HCT116 (cell line): ENCODE measurements at regions of chr5 and their contacts with region 1.

Region 1: GRCh38 chr5:57298295-57298984 is 124.6 kb downstream of the GPBP1 start:
- DNase-seq: peak; percentile 82
- ATAC-seq: peak; percentile 75
- H3K4me3 ChIP-seq: no peak overlapping the region
- H3K27ac ChIP-seq: peak overlapping the region; percentile 23; the same call in 1 of the 2 replicates
- H3K4me1 ChIP-seq: peaks cover 21 to 38% of the 10 kb centered on the region in 2 experiments
- H3K27me3 ChIP-seq: no peaks in the 10 kb centered on the region
- CTCF ChIP-seq: peak; percentile 62 to 82 (median 69)
- POLR2A ChIP-seq: no peak
- RAD21 ChIP-seq: peak; percentile 92

Region 2: GRCh38 chr5:57383093-57383861 is 84.8 kb after region 1 on chr5:
- CTCF ChIA-PET with region 1: no interaction called
- POLR2A ChIA-PET with region 1: no interaction called
- RAD21 ChIA-PET with region 1: no interaction called
- intact Hi-C with region 1: loop called (anchors 1 kb)
- DNase-seq: peak; percentile 92
- ATAC-seq: peak; percentile 96
- H3K4me3 ChIP-seq: peak overlapping the region in 1 of 2 experiments; percentile 17; a peak in 1 of 4 replicates
- H3K27ac ChIP-seq: peak overlapping the region; percentile 95
- H3K4me1 ChIP-seq: peaks cover 27 to 37% of the 10 kb centered on the region in 2 experiments
- H3K27me3 ChIP-seq: no peaks in the 10 kb centered on the region
- CTCF ChIP-seq: 0 out of 6 replicates have a peak, but pooled peaks of 1 of the 3 experiments have one; percentile 17
- POLR2A ChIP-seq: no peak
- RAD21 ChIP-seq: peak; percentile 50

Region 3: GRCh38 chr5:57494104-57495098 is 196.0 kb after region 1 on chr5:
- CTCF ChIA-PET with region 1: interaction called, 16 read pairs
- POLR2A ChIA-PET with region 1: interaction called, 3 read pairs
- RAD21 ChIA-PET with region 1: interaction called in 1 of 2 experiments, 3 read pairs
- intact Hi-C with region 1: loop called (anchors 1 kb)
- DNase-seq: peak; percentile 90
- ATAC-seq: peak; percentile 92
- H3K4me3 ChIP-seq: peak overlapping the region; percentile 2 to 47; a peak in 3 of 4 replicates
- H3K27ac ChIP-seq: peak overlapping the region; percentile 75
- H3K4me1 ChIP-seq: peaks cover 40 to 56% of the 10 kb centered on the region in 2 experiments
- H3K27me3 ChIP-seq: no peaks in the 10 kb centered on the region
- CTCF ChIP-seq: no peak
- POLR2A ChIP-seq: no peak
- RAD21 ChIP-seq: peak; percentile 25; the same call in 1 of the 2 replicates

Region 4: DNA sequence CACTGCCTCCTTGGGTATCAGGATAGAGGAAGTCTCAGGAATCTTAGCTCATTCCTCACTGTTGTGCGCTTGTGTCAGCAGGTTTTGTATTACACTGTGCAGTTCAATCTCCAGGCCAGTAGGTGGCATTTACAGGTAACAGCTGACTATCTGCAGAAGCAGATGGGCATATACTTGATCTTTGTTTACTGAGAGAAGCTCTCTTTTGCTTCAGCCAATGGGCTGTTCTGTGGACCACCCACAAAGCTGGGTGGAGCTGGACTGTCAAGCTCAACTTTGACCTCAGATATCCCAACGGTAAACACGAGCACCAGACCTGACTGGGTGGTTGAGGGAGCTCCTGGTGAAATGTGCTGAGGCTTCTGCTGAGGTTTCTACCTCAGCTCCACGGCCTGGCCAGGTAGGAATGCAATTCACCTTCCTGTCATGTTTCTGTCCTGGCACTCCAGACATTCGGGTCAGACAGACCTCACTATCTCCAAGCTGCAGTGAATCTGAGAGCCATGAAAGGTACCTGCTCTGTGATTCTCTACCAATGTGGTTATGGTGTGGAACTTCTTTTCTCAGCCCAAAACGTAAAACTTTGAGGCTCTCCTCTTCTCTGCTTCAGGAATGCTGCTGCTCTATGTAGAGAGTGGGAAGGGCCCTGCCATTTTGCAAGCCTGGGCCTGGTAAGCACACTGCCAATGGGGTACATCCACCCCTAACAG is 352.1 kb after region 1 on chr5:
- CTCF ChIA-PET with region 1: interaction called, 10 read pairs
- POLR2A ChIA-PET with region 1: no interaction called
- RAD21 ChIA-PET with region 1: no interaction called
- intact Hi-C with region 1: no loop called
- DNase-seq: peak; percentile 57
- ATAC-seq: peak; percentile 97
- H3K4me3 ChIP-seq: no peak overlapping the region
- H3K27ac ChIP-seq: no peak overlapping the region
- H3K4me1 ChIP-seq: peaks cover 0 to 10% of the 10 kb centered on the region in 2 experiments; a peak in 2 of 4 replicates
- H3K27me3 ChIP-seq: no peaks in the 10 kb centered on the region
- CTCF ChIP-seq: peak; percentile 44 to 82 (median 81); a peak in 5 of 6 replicates
- POLR2A ChIP-seq: no peak
- RAD21 ChIP-seq: peak; percentile 80

Region 5: GRCh38 chr5:57887851-57888621 is 589.6 kb after region 1 on chr5:
- CTCF ChIA-PET with region 1: interaction called, 4 read pairs
- POLR2A ChIA-PET with region 1: no interaction called
- RAD21 ChIA-PET with region 1: no interaction called
- intact Hi-C with region 1: loop called (anchors 2 kb)
- DNase-seq: peak; percentile 61
- ATAC-seq: peak; percentile 88
- H3K4me3 ChIP-seq: no peak overlapping the region
- H3K27ac ChIP-seq: no peak overlapping the region
- H3K4me1 ChIP-seq: peaks cover 18 to 29% of the 10 kb centered on the region in 2 experiments
- H3K27me3 ChIP-seq: no peaks in the 10 kb centered on the region
- CTCF ChIP-seq: peak; percentile 59 to 75 (median 68); a peak in 5 of 6 replicates
- POLR2A ChIP-seq: no peak
- RAD21 ChIP-seq: peak; percentile 81

Region 6: DNA sequence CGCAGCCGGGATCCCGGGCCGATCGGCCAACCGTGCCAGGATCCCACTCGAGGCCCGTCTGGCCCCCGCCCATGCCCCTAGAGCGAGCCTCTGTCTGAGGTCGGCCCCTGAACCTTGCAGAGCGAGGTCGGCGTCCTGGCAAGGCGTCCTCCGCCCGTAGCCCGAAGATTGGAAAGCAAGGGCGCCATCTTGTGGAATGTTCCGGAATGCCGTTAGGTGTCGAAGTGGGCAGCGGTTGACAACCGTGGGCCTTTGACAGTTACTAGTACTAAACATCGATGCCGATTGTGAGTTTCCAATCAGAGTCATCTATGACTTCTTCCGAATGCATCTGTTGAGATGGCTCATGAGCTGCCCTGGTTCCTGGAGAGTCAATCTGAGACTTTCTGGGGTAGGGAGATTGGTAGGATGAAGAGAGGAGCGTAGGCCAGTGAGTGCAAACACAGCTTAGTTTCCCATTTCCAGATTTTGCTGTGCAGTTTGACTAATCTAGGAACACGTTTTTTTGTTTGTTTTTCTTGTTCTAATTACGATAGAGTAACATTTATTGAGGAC is 1162.4 kb after region 1 on chr5:
- CTCF ChIA-PET with region 1: interaction called, 42 read pairs
- POLR2A ChIA-PET with region 1: interaction called, 5 read pairs
- RAD21 ChIA-PET with region 1: interaction called in 1 of 2 experiments, 3 read pairs
- intact Hi-C with region 1: loop called (anchors 1 kb)
- DNase-seq: peak; percentile 77
- ATAC-seq: peak; percentile 71
- H3K4me3 ChIP-seq: peak overlapping the region; percentile 82
- H3K27ac ChIP-seq: peak overlapping the region; percentile 92
- H3K4me1 ChIP-seq: peaks cover 8 to 45% of the 10 kb centered on the region in 2 experiments
- H3K27me3 ChIP-seq: no peaks in the 10 kb centered on the region
- CTCF ChIP-seq: peak; percentile 63 to 81 (median 77)
- POLR2A ChIP-seq: no peak
- RAD21 ChIP-seq: peak; percentile 91